Motor neuron (in vitro differentiated cells): ENCODE measurements at regions of chr17 and their contacts with region 1.

Region 1: DNA sequence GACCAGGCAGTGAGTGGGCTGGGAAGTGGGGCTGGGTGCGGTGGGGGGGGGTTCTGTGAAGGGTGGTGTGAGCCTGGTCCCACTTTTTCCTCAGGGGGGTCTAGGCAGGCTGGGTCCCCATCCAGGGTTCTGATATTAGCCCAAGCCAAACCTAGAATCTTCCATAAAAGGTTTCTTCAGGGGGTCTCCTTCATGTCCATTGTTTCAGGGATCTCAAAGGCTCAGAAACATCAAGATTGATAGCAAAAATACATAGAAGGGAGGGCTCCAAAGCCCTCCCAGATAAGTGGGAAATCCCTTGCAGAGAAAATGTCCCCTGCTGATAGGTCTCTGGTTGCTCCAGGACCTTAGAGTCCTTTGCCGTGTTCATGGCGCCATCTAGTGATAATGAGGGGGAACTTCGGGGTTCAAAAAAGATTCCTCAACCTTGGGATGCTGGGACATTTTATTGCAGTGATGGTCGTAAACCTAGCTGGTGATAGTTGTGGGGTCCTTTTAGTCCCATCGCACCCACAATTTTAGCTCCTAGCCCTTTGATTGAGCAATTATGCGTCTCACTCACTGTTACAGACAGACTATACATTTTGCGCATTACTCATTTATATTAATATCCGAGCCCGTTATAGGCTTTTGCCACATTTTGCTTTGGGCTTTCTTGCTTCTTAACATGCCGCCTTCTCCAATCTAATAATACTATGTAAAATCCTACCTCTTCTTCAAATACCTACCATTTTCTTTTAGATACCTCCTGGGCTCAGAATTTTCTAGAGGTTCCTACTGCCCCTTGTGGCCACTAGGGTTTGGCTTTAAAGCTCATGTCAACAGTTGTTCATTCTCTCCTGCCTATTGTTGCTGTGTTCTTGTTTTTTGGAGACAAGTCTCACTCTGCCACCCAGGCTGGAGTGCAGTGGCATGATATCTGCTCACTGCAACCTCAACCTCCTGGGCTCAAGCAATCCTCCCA is 35.1 kb downstream of the IGF2BP1 start:
- ATAC-seq: peak; percentile 84 to 93 (median 91)
- H3K4me3 ChIP-seq: peak overlapping the region in 1 of 5 donors; percentile 2
- H3K27ac ChIP-seq: peak overlapping the region in 1 of 2 donors; percentile 62
- H3K4me1 ChIP-seq: peaks cover 2 to 6% of the 10 kb centered on the region in 2 donors

Region 2: DNA sequence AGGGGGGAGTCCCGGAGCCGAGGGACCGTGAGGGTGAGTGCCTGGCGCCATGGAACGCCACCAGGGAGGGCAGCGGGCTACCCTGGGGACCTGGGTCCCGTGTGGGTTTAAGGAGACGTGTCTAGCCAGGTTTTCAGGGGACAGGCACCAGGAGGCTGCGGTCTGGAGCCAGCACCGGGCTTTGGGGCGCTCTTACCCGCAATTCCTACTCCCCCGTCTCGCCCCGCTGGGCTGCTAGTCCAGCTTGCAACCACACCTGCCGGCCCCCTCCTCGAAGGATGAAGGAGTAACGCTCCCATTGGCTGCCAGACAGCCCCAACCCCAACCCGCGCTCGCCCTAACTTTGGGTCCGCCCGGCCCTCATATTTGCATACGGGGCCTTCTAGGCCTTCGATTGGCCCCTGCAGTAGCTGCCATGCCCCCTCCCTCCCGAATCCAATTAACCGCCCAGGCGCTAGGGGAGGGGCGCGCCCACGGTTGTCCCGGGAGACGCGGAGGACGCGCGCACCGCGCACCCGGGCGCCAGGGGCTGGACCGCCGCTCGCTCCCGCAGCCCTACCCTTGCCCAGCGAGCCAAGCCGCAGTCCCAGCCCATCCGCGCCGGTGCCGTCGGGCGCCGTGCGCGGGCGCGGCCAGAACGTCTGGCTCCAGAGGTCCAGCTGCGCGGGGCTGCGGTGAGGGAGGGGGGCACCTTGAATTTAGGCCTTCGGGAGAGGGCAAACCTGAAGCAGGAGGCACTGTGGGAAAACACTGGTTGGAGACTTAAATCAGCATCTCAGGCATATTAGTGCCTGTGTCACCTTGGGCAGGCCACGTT is 215.3 kb before region 1 on chr17 and contains the start of gene TTLL6:
- in situ Hi-C with region 1: loop called in 1 of 9 experiments (anchors 25 kb)
- ATAC-seq: peak; percentile 70 to 98 (median 83)
- H3K4me3 ChIP-seq: peak within 1 kb of the TSS; percentile 24 to 44 (median 36)
- H3K27ac ChIP-seq: peak within 1 kb of the TSS; percentile 65 to 76
- H3K4me1 ChIP-seq: peaks cover 20 to 21% of the 10 kb centered on the region in 2 donors
- total RNA-seq, gene TTLL6: 0.36 to 3.9 (median 1.1) TPM in 6 of 8 experiments, not detected in the others

Region 3: DNA sequence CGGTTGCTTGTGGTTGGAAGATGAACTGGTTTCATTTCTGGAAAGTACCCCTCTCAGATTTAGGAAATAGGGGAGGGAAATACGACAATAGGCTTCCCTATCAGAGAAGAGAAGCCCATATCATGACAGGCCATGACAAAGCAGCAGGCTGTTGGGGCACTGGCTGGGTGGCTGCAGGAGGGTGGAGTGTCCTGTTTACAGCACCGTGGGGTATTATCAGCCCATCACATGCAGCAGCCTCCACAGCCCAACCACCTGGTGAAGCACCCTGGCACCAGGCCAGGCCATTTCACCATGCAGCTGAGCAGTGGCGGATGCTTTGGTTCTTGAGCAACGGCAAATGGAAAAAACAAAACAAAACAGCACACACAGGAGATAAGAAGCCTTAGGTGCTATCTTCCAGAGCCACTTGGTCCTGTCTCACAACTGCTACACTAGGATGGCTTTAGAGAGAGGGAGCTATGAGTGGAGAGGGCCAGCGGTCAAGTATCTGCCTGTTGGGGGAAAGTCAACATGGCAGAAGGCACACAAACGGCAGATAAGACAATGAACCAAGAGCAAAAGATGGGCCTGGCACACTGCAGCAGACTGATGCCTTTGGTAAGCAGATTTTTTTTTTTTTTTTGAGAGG is 707.5 kb after region 1 on chr17:
- in situ Hi-C with region 1: no loop called
- ATAC-seq: peak in 1 of 8 experiments; percentile 36
- H3K4me3 ChIP-seq: no peak overlapping the region
- H3K27ac ChIP-seq: peak overlapping the region in 1 of 2 donors; percentile 33
- H3K4me1 ChIP-seq: no peaks in the 10 kb centered on the region